Activated T-helper 1 cell treated with anti-CD3 and anti-CD28 coated beads, Interleukin-12 subunit alpha, Interleukin-12 subunit beta, Interleukin-2, Interleukin-4 antibody, amounts not matched to agents 30 ng/mL and 10 ng/mL and 1 ng/mL, durations not matched to agents 14 hours and 24 hours and 36 hours (primary cell): ENCODE measurements at regions of chr13 and their contacts with region 1.

Region 1: GRCh38 chr13:95676762-95677563 is at the start of gene DNAJC3:
- DNase-seq: peak; percentile 99
- H3K4me3 Mint-ChIP-seq: peak within 1 kb of the TSS; percentile 93
- H3K27ac Mint-ChIP-seq: peak within 1 kb of the TSS; percentile 86
- H3K4me1 Mint-ChIP-seq: peaks cover 50% of the 10 kb centered on the region
- H3K27me3 Mint-ChIP-seq: peaks cover 3% of the 10 kb centered on the region
- total RNA-seq, gene DNAJC3: 27.9 and 30.1 TPM in 2 replicates

Region 2: DNA sequence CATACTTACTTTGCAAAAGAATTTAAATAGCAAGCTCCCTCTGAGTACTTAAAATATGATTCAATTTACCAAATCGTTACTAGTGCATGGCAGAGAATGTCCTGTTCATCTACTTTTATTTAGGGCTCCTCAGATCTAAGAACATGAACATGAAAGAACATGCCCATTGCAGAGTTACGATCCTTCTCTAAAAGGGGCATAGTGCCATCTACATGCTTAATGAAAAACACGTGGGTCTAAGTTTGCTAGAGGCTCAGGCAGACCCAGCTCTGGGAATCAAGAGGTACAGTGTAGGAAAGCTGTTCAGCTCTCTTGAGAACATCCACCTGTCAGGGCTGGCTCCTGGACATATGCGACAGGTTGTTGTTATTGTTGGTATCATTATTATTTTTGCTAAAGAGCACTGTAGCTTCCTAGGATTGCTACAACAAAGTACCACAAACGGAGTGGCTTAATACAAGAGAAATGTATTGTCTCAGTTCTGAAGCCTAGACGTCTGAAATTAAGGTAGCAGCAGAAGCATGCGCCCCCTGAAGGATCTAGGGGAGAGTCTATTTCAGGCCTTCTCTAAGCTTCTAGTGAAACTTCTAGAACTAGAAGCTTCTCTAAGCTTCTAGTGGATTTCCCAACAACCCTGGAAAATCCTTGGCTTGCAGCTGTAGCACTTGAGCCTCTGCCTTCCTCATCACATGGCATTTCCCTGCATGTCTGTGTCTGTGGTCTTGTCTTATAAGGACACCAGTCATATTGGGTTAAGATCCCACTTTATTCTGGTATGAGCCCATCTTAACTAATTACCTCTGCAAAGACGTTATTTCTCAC is 1331.4 kb before region 1 on chr13:
- intact Hi-C with region 1: loop called (anchors 2 kb)
- DNase-seq: no peak
- H3K4me3 Mint-ChIP-seq: no peak overlapping the region
- H3K27ac Mint-ChIP-seq: no peak overlapping the region
- H3K4me1 Mint-ChIP-seq: peaks cover 28% of the 10 kb centered on the region
- H3K27me3 Mint-ChIP-seq: peaks cover 6% of the 10 kb centered on the region

Region 3: GRCh38 chr13:94674609-94675348 is 1002.2 kb before region 1 on chr13:
- intact Hi-C with region 1: loop called (anchors 2 kb)
- DNase-seq: no peak
- H3K4me3 Mint-ChIP-seq: no peak overlapping the region
- H3K27ac Mint-ChIP-seq: no peak overlapping the region
- H3K4me1 Mint-ChIP-seq: no peaks in the 10 kb centered on the region
- H3K27me3 Mint-ChIP-seq: peaks cover 19% of the 10 kb centered on the region

Region 4: DNA sequence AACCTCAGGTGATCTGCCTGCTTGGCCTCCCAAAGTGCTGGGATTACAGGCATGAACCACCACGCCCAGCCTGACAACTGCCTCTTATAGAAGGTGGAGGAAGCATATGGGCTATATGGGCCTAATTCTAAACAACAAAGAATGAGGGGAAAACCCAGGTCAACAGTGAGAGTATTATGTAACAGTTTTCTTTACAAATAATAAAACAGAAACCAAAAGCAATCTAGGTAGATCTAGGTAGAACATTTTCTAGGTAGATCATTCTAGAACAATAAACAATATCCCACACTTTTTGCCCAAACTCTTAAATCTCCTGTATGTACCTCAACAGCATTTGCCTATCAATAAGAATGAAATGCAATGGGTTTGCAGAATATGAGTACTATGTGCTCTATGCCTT is 643.1 kb before region 1 on chr13:
- intact Hi-C with region 1: no loop called
- DNase-seq: no peak
- H3K4me3 Mint-ChIP-seq: no peak overlapping the region
- H3K27ac Mint-ChIP-seq: no peak overlapping the region
- H3K4me1 Mint-ChIP-seq: peaks cover 9% of the 10 kb centered on the region
- H3K27me3 Mint-ChIP-seq: no peaks in the 10 kb centered on the region

Region 5: GRCh38 chr13:95480131-95480545 is 196.8 kb before region 1 on chr13:
- intact Hi-C with region 1: loop called (anchors 5 kb)
- DNase-seq: no peak
- H3K4me3 Mint-ChIP-seq: peak overlapping the region; percentile 21
- H3K27ac Mint-ChIP-seq: peak overlapping the region; percentile 23
- H3K4me1 Mint-ChIP-seq: peaks cover 25% of the 10 kb centered on the region
- H3K27me3 Mint-ChIP-seq: peaks cover 6% of the 10 kb centered on the region

Region 6: GRCh38 chr13:95642028-95642621 is 34.8 kb before region 1 on chr13:
- intact Hi-C with region 1: no loop called
- DNase-seq: no peak
- H3K4me3 Mint-ChIP-seq: no peak overlapping the region
- H3K27ac Mint-ChIP-seq: no peak overlapping the region
- H3K4me1 Mint-ChIP-seq: peaks cover 15% of the 10 kb centered on the region
- H3K27me3 Mint-ChIP-seq: peaks cover 58% of the 10 kb centered on the region

Region 7: GRCh38 chr13:95689582-95689926 is 12.6 kb after region 1 on chr13:
- intact Hi-C with region 1: loop called (anchors 1 kb)
- DNase-seq: no peak
- H3K4me3 Mint-ChIP-seq: no peak overlapping the region
- H3K27ac Mint-ChIP-seq: peak overlapping the region; percentile 30
- H3K4me1 Mint-ChIP-seq: peaks cover 28% of the 10 kb centered on the region
- H3K27me3 Mint-ChIP-seq: no peaks in the 10 kb centered on the region

Region 8: GRCh38 chr13:97432917-97433726 is 1756.2 kb after region 1 on chr13:
- intact Hi-C with region 1: loop called (anchors 1 kb)
- DNase-seq: peak; percentile 99
- H3K4me3 Mint-ChIP-seq: peak overlapping the region; percentile 99
- H3K27ac Mint-ChIP-seq: peak overlapping the region; percentile 100
- H3K4me1 Mint-ChIP-seq: peaks cover 39% of the 10 kb centered on the region
- H3K27me3 Mint-ChIP-seq: peaks cover 12% of the 10 kb centered on the region